Left cardiac atrium (tissue), 4 donors: ENCODE measurements at regions of chr11 and their contacts with region 1.

Region 1: DNA sequence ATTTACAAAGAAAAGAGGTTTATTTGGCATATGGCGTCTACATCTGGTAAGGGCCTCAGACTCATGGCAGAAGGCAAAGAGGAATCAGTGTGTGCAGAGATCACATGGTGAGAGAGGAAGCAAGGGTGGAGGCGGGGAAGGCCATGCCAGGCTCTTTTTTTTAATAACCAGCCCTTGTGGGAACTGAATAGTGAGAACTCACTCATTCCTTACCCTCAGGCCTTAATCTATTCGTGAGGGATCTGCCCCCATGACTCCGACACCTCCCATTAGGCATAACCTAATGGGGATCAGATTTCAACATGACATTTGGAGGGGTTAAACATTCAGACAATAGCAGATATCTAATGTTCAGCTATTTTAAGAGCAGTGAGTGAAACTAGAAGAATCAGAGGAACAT is 55.7 kb downstream of the ATM start:
- DNase-seq: no peak
- ATAC-seq: peak; percentile 64 to 72

Region 2: GRCh38 chr11:108147150-108147549 is 131.4 kb before region 1 on chr11:
- intact Hi-C with region 1: loop called in 1 of 2 experiments (anchors 10 kb)
- DNase-seq: no peak
- ATAC-seq: no peak

Region 3: GRCh38 chr11:108393046-108393445 is 114.5 kb after region 1 on chr11:
- intact Hi-C with region 1: no loop called
- DNase-seq: no peak
- ATAC-seq: peak in 1 of 2 donors; percentile 19